Psoas muscle (tissue), 8 donors: ENCODE measurements at regions of chr7 and their contacts with region 1.

Region 1: GRCh38 chr7:17680943-17681351 is 259.3 kb downstream of the SNX13 start:
- DNase-seq: no peak
- ATAC-seq: no peak
- H3K4me3 ChIP-seq: no peak overlapping the region
- H3K27ac ChIP-seq: no peak overlapping the region
- H3K4me1 ChIP-seq: peaks cover 4% of the 10 kb centered on the region
- H3K27me3 ChIP-seq: no peaks in the 10 kb centered on the region
- CTCF ChIP-seq: peak; percentile 56

Region 2: GRCh38 chr7:18345641-18346234 is 664.8 kb after region 1 on chr7:
- intact Hi-C with region 1: loop called (anchors 2 to 10 kb)
- DNase-seq: no peak
- ATAC-seq: peak in 1 of 4 donors; percentile 45
- H3K4me3 ChIP-seq: no peak overlapping the region
- H3K27ac ChIP-seq: no peak overlapping the region
- H3K4me1 ChIP-seq: no peaks in the 10 kb centered on the region
- H3K27me3 ChIP-seq: no peaks in the 10 kb centered on the region
- CTCF ChIP-seq: peak; percentile 68

Region 3: GRCh38 chr7:18408461-18408860 is 727.5 kb after region 1 on chr7:
- intact Hi-C with region 1: no loop called
- DNase-seq: no peak
- ATAC-seq: no peak
- H3K4me3 ChIP-seq: no peak overlapping the region
- H3K27ac ChIP-seq: no peak overlapping the region
- H3K4me1 ChIP-seq: no peaks in the 10 kb centered on the region
- H3K27me3 ChIP-seq: peaks cover 0 to 2% (median 0%) of the 10 kb centered on the region in 3 donors
- CTCF ChIP-seq: no peak